H1 (cell line): ENCODE measurements at regions of chr6 and their contacts with region 1.

Region 1: GRCh38 chr6:24818346-24818745 is 19.6 kb upstream of the ARMH2 start:
- DNase-seq: no peak
- H3K4me3 ChIP-seq: no peak overlapping the region
- H3K27ac ChIP-seq: no peak overlapping the region
- H3K4me1 ChIP-seq: no peaks in the 10 kb centered on the region
- H3K27me3 ChIP-seq: no peaks in the 10 kb centered on the region
- CTCF ChIP-seq: no peak
- EP300 ChIP-seq: no peak
- POLR2A ChIP-seq: no peak
- RAD21 ChIP-seq: no peak

Region 2: GRCh38 chr6:24802271-24803059 is 15.9 kb before region 1 on chr6:
- CTCF ChIA-PET with region 1: interaction called, 12 read pairs
- POLR2A ChIA-PET with region 1: no interaction called
- DNase-seq: no peak
- H3K4me3 ChIP-seq: no peak overlapping the region
- H3K27ac ChIP-seq: no peak overlapping the region
- H3K4me1 ChIP-seq: peaks cover 0 to 4% (median 0%) of the 10 kb centered on the region in 4 experiments; a peak in 2 of 7 replicates
- H3K27me3 ChIP-seq: no peaks in the 10 kb centered on the region
- CTCF ChIP-seq: no peak
- EP300 ChIP-seq: no peak
- POLR2A ChIP-seq: no peak
- RAD21 ChIP-seq: no peak